ENCODE measurements at regions of chr21 and their contacts with region 1.

Region 1: GRCh38 chr21:33360881-33361602 is 36.3 kb downstream of the IFNAR1 start:
- DNase-seq: peak; percentile 71 to 96
- H3K4me3 ChIP-seq: no peak overlapping the region
- CTCF ChIP-seq: peak in 1 of 3 donors; percentile 74
- POLR2A ChIP-seq: no peak

Region 2: GRCh38 chr21:33199516-33200217 is 161.4 kb before region 1 on chr21:
- intact Hi-C with region 1: loop called (anchors 10 kb)
- DNase-seq: peak; percentile 90 to 91
- H3K4me3 ChIP-seq: no peak overlapping the region
- CTCF ChIP-seq: peak in 1 of 3 donors; percentile 72
- POLR2A ChIP-seq: no peak

Region 3: DNA sequence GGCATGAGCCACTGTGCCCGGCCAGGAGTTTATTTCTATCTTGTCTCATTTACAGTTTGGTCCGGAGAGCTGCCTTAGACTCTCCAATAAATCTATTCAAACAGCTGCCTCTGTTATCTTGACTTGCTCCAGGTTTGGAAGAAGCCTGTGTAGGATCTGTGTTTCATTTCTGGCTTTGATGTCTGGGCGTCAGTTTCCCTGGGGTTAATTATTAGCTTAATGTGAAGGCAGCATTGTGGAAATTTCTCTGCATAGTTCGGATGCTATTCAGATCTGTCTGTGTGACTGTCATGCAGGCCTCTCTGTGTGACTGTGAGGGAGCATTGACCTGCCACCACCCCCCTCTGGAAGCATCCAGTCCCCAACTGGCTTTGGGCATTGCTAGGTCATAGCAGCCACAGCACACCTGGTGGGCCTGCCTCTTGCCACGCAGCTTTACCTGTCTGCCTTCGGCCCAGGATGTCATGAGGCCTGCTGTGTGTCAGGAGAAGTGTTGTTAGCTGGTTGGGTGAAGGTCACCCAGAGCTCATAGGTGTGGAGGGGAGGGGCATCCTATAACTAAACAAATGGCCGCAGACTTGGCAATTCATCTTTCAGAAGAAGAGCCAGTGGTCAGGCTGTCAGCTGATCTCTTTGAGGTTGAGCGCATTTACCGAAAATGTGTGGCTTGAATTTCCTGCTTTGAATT is 51.9 kb after region 1 on chr21:
- intact Hi-C with region 1: no loop called
- DNase-seq: no peak
- H3K4me3 ChIP-seq: no peak overlapping the region
- CTCF ChIP-seq: no peak
- POLR2A ChIP-seq: no peak

Region 4: DNA sequence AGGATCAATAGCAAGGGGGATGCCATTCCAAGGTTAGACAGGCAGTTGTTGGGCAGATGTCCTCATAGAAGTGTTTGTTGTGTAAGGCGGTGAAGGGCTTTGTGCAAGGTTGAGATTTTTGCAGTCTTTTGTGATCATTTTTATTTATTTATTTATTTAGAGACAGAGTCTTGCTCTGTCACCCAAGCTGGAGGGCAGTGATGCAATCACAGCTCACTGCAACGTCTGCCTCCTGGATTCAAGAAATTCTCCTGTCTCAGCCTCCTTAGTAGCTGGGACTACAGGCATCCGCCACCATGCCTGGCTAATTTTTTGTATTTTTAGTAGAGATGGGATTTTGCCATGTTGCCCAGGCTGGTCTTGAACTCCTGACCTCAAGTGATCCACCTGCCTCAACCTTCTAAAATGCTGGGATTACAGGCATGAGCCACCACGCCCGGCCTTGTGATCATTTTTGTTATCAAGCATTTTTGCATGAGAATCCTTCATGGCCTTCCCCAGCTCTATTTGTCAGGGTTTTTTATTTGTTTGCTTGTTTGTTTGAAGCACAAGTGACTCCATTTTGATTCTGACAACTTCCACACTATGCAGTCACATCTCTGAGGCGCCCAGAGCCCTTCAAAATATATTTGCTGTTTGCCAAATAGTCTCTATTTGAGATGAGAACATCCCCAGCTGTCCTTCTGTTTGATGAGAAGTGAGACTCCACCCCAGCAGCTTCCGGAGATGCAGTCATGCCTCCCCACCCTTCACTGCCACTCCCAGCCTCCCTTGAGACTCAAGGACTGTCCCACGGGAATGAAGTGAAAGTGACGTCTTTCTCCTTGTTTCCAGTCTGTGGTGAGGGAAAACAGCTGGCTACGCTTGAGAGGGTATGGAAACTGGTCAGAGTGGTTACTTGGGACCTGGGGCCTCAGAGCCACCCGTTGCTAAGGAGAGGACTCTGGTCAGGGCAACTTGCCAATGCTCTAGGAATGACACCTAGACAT is 80.7 kb after region 1 on chr21:
- intact Hi-C with region 1: loop called (anchors 10 kb)
- DNase-seq: peak in 1 of 2 donors; percentile 76
- H3K4me3 ChIP-seq: no peak overlapping the region
- CTCF ChIP-seq: no peak
- POLR2A ChIP-seq: no peak